GM12878 (cell line): ENCODE measurements at regions of chr15 and their contacts with region 1.

Region 1: DNA sequence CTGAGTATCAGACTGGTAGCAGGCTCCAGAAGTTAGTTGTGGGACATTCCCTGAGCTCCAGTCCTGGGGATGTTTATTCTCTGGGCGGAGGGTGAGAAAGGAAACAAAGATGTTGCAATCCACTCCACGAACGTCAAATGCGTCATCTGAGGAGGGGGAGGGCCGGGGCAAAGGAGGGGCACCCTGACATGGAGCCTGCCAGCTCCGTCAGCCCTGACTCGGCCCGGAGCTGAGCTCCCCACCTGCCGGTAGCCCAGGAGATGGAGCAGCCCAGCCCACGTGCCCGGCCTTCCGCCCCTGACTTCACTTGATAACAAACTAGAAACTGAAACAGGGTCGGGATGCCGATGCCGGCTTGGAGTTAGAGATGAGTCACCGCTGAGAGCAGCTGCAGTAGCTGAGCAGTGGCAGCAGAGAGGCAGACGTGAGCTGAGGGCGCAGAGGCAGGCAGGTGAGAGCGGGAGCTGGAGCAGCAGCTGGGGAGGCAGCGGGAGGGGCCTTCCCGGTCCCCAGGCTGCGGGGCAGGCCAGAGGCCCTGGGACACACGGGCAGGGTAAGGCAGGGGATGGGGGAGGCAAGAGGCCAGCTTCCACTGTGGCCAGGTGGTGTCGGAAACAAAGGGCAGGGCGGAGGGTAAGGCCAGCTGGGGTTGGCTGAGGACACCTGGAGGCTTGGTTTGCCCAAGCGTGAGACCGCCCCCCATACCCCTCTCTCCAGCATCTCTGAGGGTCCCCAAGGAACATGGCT is at the start of gene ISG20:
- DNase-seq: peak; percentile 93
- ATAC-seq: peak; percentile 78
- H3K4me3 ChIP-seq: peak within 1 kb of the TSS; percentile 89
- H3K27ac ChIP-seq: peak within 1 kb of the TSS; percentile 99
- H3K4me1 ChIP-seq: peaks cover 69% of the 10 kb centered on the region
- H3K27me3 ChIP-seq: no peaks in the 10 kb centered on the region
- CTCF ChIP-seq: peak; percentile 39 to 53 (median 52); a peak in 4 of 6 replicates
- EP300 ChIP-seq: peak in 1 of 2 experiments; percentile 52; a peak in 2 of 4 replicates
- POLR2A ChIP-seq: peak; percentile 97
- RAD21 ChIP-seq: peak; percentile 51
- polyA plus RNA-seq, gene ISG20: 49.6 to 92.9 TPM

Region 2: GRCh38 chr15:88657326-88658069 is 18.7 kb after region 1 on chr15:
- CTCF ChIA-PET with region 1: interaction called, 14 read pairs
- POLR2A ChIA-PET with region 1: interaction called, 10 read pairs
- RAD21 ChIA-PET with region 1: interaction called, 7 read pairs
- SMC1A ChIA-PET with region 1: interaction called, 8 read pairs
- in situ Hi-C with region 1: no loop called
- intact Hi-C with region 1: no loop called
- DNase-seq: no peak
- ATAC-seq: peak; percentile 71
- H3K4me3 ChIP-seq: no peak overlapping the region
- H3K27ac ChIP-seq: no peak overlapping the region
- H3K4me1 ChIP-seq: peaks cover 15% of the 10 kb centered on the region
- H3K27me3 ChIP-seq: no peaks in the 10 kb centered on the region
- CTCF ChIP-seq: peak; percentile 52 to 60 (median 55)
- EP300 ChIP-seq: no peak
- POLR2A ChIP-seq: no peak
- RAD21 ChIP-seq: peak; percentile 75

Region 3: GRCh38 chr15:88664151-88664778 is 25.5 kb after region 1 on chr15:
- CTCF ChIA-PET with region 1: interaction called, 14 read pairs
- POLR2A ChIA-PET with region 1: no interaction called
- RAD21 ChIA-PET with region 1: interaction called, 12 read pairs
- SMC1A ChIA-PET with region 1: interaction called, 11 read pairs
- in situ Hi-C with region 1: no loop called
- intact Hi-C with region 1: no loop called
- DNase-seq: no peak
- ATAC-seq: peak; percentile 91
- H3K4me3 ChIP-seq: no peak overlapping the region
- H3K27ac ChIP-seq: no peak overlapping the region
- H3K4me1 ChIP-seq: no peaks in the 10 kb centered on the region
- H3K27me3 ChIP-seq: no peaks in the 10 kb centered on the region
- CTCF ChIP-seq: peak; percentile 46 to 66 (median 58)
- EP300 ChIP-seq: no peak
- POLR2A ChIP-seq: no peak
- RAD21 ChIP-seq: peak; percentile 81

Region 4: DNA sequence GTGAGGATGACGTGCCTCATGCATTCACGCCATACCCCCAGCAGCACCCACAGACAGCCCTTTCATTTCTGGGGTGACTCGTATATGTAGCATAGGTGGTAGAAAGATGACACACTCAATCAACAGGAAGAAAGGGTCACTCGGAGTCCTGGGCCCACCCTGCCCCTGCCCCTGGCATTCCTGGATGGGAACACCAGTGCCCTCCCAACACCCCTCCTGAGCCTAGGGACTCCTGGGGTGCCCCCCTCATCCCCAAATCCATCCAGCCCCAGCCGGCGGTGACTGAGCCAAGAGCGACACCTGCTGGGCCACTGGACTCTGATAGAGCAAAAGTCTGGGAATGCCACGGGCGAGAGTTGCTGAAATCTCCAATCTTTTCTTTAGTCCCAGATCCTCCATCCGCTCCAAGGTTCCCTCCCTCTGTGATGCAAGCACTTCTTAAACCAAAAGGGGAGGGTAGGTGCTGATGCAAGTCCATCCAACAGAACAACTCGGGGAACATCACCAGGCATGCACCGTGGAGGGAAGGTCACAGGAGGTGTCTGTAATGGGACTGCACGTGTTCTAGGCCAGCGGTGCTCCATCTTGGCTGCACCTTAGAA is 195.5 kb after region 1 on chr15:
- CTCF ChIA-PET with region 1: no interaction called
- POLR2A ChIA-PET with region 1: no interaction called
- RAD21 ChIA-PET with region 1: interaction called, 10 read pairs
- SMC1A ChIA-PET with region 1: no interaction called
- in situ Hi-C with region 1: no loop called
- intact Hi-C with region 1: no loop called
- DNase-seq: no peak
- ATAC-seq: peak; percentile 81
- H3K4me3 ChIP-seq: no peak overlapping the region
- H3K27ac ChIP-seq: no peak overlapping the region
- H3K4me1 ChIP-seq: no peaks in the 10 kb centered on the region
- H3K27me3 ChIP-seq: no peaks in the 10 kb centered on the region; a peak in 1 of 4 replicates
- CTCF ChIP-seq: peak; percentile 37 to 53 (median 51)
- EP300 ChIP-seq: no peak
- POLR2A ChIP-seq: no peak
- RAD21 ChIP-seq: peak; percentile 61